GM12878 (cell line): ENCODE measurements at regions of chr17 and their contacts with region 1.

Region 1: DNA sequence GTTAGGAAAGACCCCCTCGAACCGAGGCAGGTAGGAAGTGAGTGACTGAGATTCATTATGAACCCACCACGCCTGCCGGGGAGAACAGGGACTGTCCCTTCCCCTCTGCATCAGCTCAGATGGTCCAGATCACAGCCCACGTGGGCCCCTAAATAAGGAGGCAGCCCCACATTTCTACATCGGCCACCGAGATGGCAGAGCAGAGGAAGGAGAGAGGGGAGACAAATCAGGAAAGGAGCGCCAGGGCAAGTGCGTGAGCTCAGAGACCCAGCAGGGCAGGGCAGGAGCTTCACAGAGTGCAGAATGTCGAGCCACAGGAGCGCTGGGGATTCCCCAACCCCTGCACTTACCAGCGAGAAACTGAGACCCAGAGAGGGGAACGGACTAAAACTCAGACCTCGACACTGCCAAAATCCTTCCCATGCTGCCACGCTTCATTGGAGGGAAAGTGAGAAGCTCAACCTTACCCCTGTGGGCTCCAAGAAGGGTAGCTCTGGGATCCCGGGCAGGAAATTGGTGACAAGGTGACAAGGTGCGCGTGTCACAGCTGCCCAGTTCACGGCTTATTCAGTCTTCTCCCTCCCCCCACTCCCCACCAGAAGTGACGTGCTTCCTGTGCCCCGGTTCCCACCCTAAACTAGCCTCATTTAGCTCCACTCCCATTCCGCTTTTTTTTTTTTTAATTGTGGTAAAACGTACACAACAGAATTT is at the start of gene ICAM2:
- DNase-seq: peak; percentile 90
- ATAC-seq: peak; percentile 79
- H3K4me3 ChIP-seq: peak within 1 kb of the TSS; percentile 74
- H3K27ac ChIP-seq: peak within 1 kb of the TSS; percentile 98
- H3K4me1 ChIP-seq: peaks cover 16% of the 10 kb centered on the region
- H3K27me3 ChIP-seq: no peaks in the 10 kb centered on the region
- CTCF ChIP-seq: peak in 1 of 3 experiments; percentile 15; a peak in 1 of 6 replicates
- EP300 ChIP-seq: peak in 1 of 2 experiments; percentile 73; a peak in 2 of 4 replicates
- POLR2A ChIP-seq: peak; percentile 76
- RAD21 ChIP-seq: no peak
- polyA plus RNA-seq, gene ICAM2: 23.6 to 27.7 TPM

Region 2: GRCh38 chr17:63919311-63919723 is 100.9 kb before region 1 on chr17:
- CTCF ChIA-PET with region 1: interaction called, 351 read pairs
- POLR2A ChIA-PET with region 1: interaction called, 5 read pairs
- RAD21 ChIA-PET with region 1: interaction called, 54 read pairs
- SMC1A ChIA-PET with region 1: interaction called, 88 read pairs
- in situ Hi-C with region 1: loop called (anchors 5 kb)
- intact Hi-C with region 1: loop called (anchors 1 kb)
- DNase-seq: peak; percentile 71
- ATAC-seq: peak; percentile 83
- H3K4me3 ChIP-seq: no peak overlapping the region
- H3K27ac ChIP-seq: no peak overlapping the region
- H3K4me1 ChIP-seq: peaks cover 16% of the 10 kb centered on the region
- H3K27me3 ChIP-seq: no peaks in the 10 kb centered on the region
- CTCF ChIP-seq: peak; percentile 92 to 97 (median 94)
- EP300 ChIP-seq: no peak
- POLR2A ChIP-seq: no peak
- RAD21 ChIP-seq: peak; percentile 97

Region 3: GRCh38 chr17:63931099-63931561 is 89.1 kb before region 1 on chr17:
- CTCF ChIA-PET with region 1: interaction called, 12 read pairs
- POLR2A ChIA-PET with region 1: interaction called, 33 read pairs
- RAD21 ChIA-PET with region 1: interaction called, 14 read pairs
- SMC1A ChIA-PET with region 1: interaction called, 7 read pairs
- in situ Hi-C with region 1: no loop called
- intact Hi-C with region 1: no loop called
- DNase-seq: no peak
- ATAC-seq: peak; percentile 80
- H3K4me3 ChIP-seq: peak overlapping the region; percentile 98
- H3K27ac ChIP-seq: peak overlapping the region; percentile 89
- H3K4me1 ChIP-seq: peaks cover 46% of the 10 kb centered on the region
- H3K27me3 ChIP-seq: no peaks in the 10 kb centered on the region
- CTCF ChIP-seq: no peak
- EP300 ChIP-seq: no peak
- POLR2A ChIP-seq: no peak
- RAD21 ChIP-seq: no peak

Region 4: DNA sequence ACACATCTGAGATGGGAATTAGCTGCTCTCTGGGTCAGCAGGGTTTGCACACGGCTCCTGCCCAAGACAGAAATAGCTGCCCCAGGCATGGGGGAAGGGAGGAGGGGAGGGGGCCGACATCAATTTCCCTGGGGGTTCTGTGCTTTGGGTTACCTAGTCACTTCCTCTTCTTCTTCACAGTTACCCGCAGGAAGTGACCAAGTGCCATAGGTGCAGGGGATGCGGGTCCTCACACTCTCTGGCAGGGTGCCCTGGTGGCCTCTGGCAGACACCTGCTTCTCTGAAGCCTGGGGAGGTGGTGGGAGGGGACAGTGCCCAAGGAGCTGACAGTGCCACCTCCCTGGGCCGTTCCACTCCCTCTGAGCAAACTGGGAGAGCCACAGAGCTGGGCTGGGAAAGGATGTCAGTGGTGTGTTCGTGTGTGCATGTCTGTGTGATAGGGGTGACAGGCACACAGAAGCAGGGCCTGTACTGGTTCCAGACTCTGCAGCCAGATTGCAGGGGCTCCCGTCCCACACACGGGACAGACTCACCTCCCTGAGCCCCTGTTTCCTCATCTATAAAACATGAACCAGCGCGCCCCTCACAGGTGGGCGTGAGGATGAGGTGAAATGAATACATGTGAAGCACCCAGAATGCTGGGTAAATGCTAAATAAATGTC is 65.7 kb before region 1 on chr17:
- CTCF ChIA-PET with region 1: interaction called, 95 read pairs
- POLR2A ChIA-PET with region 1: interaction called, 7 read pairs
- RAD21 ChIA-PET with region 1: interaction called, 29 read pairs
- SMC1A ChIA-PET with region 1: interaction called, 14 read pairs
- in situ Hi-C with region 1: no loop called
- intact Hi-C with region 1: loop called (anchors 5 kb)
- DNase-seq: no peak
- ATAC-seq: peak; percentile 86
- H3K4me3 ChIP-seq: no peak overlapping the region
- H3K27ac ChIP-seq: no peak overlapping the region
- H3K4me1 ChIP-seq: peaks cover 14% of the 10 kb centered on the region
- H3K27me3 ChIP-seq: no peaks in the 10 kb centered on the region
- CTCF ChIP-seq: no peak
- EP300 ChIP-seq: no peak
- POLR2A ChIP-seq: no peak
- RAD21 ChIP-seq: no peak

Region 5: DNA sequence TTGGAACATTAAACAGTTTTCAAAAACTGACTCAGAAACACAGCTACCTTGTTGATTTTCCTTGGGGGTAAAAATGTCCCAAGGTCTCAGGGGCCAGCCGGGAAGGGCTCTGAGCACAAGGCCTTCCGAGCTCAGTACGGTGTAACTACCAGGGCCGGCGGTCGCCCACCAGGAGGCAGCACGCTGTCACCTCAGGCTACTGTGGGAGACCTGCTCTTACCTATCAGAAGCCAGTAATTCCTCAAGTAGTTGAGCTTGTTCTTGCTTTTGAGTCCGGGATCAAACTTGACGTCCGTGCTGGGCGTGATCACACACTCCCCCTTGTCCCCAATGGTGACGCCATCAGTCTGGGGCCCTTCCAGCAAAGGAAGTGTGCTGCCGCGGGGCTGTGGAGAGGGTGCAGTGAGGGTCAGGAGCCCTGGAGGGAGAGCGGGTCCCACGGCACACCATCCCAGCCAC is 43.6 kb after region 1 on chr17:
- CTCF ChIA-PET with region 1: interaction called, 12 read pairs
- POLR2A ChIA-PET with region 1: no interaction called
- RAD21 ChIA-PET with region 1: interaction called, 8 read pairs
- SMC1A ChIA-PET with region 1: interaction called, 10 read pairs
- in situ Hi-C with region 1: no loop called
- intact Hi-C with region 1: no loop called
- DNase-seq: no peak
- ATAC-seq: peak; percentile 51
- H3K4me3 ChIP-seq: no peak overlapping the region
- H3K27ac ChIP-seq: peak overlapping the region; percentile 54; the same call in 1 of the 2 replicates
- H3K4me1 ChIP-seq: peaks cover 37% of the 10 kb centered on the region
- H3K27me3 ChIP-seq: no peaks in the 10 kb centered on the region
- CTCF ChIP-seq: peak; percentile 40 to 49 (median 45)
- EP300 ChIP-seq: no peak
- POLR2A ChIP-seq: no peak
- RAD21 ChIP-seq: peak; percentile 63

Region 6: DNA sequence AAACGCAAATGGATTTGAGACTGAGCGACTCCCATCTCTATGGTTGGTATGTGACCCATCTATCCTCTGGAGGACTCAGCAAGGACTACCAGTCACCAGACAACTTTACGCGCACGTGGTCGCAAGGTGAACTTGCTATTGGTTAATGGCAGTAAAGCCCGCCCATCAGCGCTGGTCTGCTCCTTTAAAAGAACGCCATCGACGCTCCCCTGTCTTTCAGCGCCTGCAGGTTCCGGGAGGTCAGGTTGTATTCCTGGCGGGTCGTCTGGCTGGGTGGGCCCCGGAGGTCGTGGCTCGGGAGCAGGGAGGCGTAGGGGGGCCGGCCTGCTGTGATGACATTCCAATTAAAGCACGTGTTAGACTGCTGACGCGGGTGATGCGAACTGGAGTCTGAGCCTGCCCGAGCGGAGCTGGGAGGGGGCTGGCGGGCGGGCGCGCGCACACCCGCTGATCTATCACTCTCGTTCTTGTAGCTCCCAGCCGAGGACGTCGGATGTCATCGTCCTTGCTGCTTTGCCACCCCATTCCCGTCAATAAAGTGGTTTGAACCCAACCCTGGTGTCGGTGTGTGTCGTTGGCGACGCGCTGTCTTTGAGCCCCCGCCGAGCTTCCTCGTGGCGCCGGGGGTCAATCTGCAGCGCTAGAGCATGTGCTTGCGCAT is 125.7 kb after region 1 on chr17:
- CTCF ChIA-PET with region 1: interaction called, 13 read pairs
- POLR2A ChIA-PET with region 1: interaction called, 10 read pairs
- RAD21 ChIA-PET with region 1: interaction called, 3 read pairs
- SMC1A ChIA-PET with region 1: interaction called, 4 read pairs
- in situ Hi-C with region 1: no loop called
- intact Hi-C with region 1: no loop called
- DNase-seq: peak; percentile 97
- ATAC-seq: peak; percentile 95
- H3K4me3 ChIP-seq: peak overlapping the region; percentile 79
- H3K27ac ChIP-seq: peak overlapping the region; percentile 94
- H3K4me1 ChIP-seq: peaks cover 3% of the 10 kb centered on the region; the same call in 1 of the 2 replicates
- H3K27me3 ChIP-seq: no peaks in the 10 kb centered on the region
- CTCF ChIP-seq: no peak
- EP300 ChIP-seq: no peak
- POLR2A ChIP-seq: peak; percentile 98
- RAD21 ChIP-seq: no peak